PC-9 (cell line): ENCODE measurements at regions of chr3 and their contacts with region 1.

Region 1: GRCh38 chr3:168213920-168214319 is 118.2 kb upstream of the GOLIM4 start:
- DNase-seq: no peak
- H3K4me3 ChIP-seq: no peak overlapping the region
- H3K27ac ChIP-seq: no peak overlapping the region
- H3K4me1 ChIP-seq: no peaks in the 10 kb centered on the region
- H3K27me3 ChIP-seq: no peaks in the 10 kb centered on the region
- CTCF ChIP-seq: no peak

Region 2: GRCh38 chr3:168285506-168285905 is 71.6 kb after region 1 on chr3:
- CTCF ChIA-PET with region 1: no interaction called
- POLR2A ChIA-PET with region 1: no interaction called
- intact Hi-C with region 1: no loop called
- DNase-seq: no peak
- H3K4me3 ChIP-seq: no peak overlapping the region
- H3K27ac ChIP-seq: no peak overlapping the region
- H3K4me1 ChIP-seq: no peaks in the 10 kb centered on the region
- H3K27me3 ChIP-seq: no peaks in the 10 kb centered on the region
- CTCF ChIP-seq: no peak

Region 3: DNA sequence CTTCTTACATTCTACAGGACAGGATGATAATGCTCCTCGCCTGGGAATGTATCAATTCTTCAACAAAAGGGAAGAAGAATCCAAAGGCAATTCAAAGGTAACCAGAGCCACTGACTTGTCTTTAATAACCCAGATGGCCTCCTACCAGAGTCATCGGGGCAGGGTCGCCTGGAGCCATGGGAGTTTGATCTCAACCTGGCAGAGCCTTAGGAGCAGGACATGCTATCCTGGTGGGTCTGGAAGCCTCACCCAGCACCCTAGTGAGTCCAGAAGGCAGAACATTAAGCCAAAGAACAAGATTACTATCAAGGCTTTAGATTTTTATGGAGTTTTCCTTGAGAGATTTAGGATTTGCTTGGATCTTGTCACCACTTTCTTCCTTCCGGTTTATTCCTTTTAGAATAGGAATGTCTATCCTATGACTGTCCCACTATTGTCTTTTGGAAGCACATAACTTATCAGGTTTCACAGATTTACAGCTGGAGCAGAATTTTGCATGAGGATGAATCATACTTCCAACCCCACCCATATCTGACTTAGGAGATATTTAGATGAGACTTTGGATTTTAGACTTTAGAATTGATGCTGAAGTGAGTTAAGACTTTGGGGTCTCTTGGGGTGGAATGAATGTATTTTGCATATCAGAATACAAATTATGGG is 212.1 kb after region 1 on chr3:
- CTCF ChIA-PET with region 1: no interaction called
- POLR2A ChIA-PET with region 1: no interaction called
- intact Hi-C with region 1: no loop called
- DNase-seq: peak in 1 of 2 experiments; percentile 61
- H3K4me3 ChIP-seq: no peak overlapping the region
- H3K27ac ChIP-seq: no peak overlapping the region
- H3K4me1 ChIP-seq: peaks cover 12% of the 10 kb centered on the region
- H3K27me3 ChIP-seq: no peaks in the 10 kb centered on the region
- CTCF ChIP-seq: no peak

Region 4: DNA sequence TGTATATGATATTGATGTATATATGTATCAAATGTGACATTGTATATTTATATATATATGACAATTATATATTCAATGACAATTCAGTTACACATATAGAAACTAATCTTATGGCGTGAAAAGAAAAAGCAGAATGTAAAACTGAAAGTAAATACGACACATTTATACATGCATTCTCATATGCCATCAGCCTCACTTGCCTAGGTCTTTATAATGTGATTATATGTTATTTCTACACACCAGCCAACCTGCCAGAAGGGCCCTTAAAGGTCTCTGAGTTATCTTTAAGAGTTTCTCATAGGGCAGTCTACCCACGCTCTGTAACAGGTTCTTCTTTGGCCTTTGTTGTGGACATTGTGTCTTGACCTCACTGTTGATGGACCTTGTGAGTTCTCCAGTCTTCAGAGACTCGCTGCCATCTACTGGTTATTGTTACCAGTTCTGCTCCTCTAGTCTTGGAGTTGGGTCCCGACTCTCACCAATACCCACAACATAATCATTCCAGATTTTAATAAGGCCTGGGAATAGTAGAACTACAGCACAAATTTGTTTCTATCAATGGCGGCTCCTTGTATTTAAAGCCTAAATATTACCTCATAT is 253.3 kb after region 1 on chr3:
- CTCF ChIA-PET with region 1: no interaction called
- POLR2A ChIA-PET with region 1: no interaction called
- intact Hi-C with region 1: loop called (anchors 1 kb)
- DNase-seq: peak in 1 of 2 experiments; percentile 34
- H3K4me3 ChIP-seq: no peak overlapping the region
- H3K27ac ChIP-seq: no peak overlapping the region
- H3K4me1 ChIP-seq: no peaks in the 10 kb centered on the region
- H3K27me3 ChIP-seq: no peaks in the 10 kb centered on the region
- CTCF ChIP-seq: peak; percentile 47

Region 5: DNA sequence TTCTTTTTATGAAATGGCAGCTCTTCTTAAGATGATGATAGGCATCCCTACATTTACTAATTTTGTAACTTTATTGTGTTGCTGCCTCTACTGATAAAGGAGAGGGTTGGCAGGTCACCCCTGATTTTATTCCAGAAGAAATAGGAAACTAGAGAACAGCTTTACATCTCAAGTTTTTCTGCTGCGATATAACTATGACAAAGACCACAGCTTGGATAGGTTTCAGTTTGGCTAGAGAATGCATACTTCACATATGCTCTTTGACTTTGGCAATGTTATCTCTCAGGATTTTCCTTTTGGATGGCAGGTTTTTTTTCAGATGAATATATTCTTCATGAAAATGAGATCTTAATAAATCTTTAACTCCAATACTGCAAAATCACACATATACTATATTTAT is 277.1 kb after region 1 on chr3:
- CTCF ChIA-PET with region 1: no interaction called
- POLR2A ChIA-PET with region 1: no interaction called
- intact Hi-C with region 1: no loop called
- DNase-seq: no peak
- H3K4me3 ChIP-seq: no peak overlapping the region
- H3K27ac ChIP-seq: no peak overlapping the region
- H3K4me1 ChIP-seq: no peaks in the 10 kb centered on the region
- H3K27me3 ChIP-seq: no peaks in the 10 kb centered on the region
- CTCF ChIP-seq: no peak

Region 6: DNA sequence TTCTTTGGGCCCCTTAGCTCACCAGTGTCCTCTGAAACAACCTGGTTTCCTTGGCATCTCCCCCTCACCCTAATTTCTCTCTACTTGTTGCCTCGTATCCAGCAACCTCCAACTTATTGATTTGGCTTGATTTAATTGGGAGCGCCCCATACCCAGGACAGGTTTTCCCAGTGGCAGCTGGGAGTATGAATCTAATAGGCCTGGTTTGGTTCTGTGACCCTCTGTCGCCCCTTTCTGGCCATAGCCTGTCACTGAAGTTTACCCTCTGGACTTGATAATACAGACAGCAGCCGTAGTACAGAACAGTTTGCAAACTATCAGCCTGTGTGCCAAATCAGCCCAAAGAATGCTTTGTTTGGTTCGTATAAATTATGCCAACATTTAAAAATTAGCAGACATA is 406.9 kb after region 1 on chr3:
- CTCF ChIA-PET with region 1: interaction called, 7 read pairs
- POLR2A ChIA-PET with region 1: no interaction called
- intact Hi-C with region 1: loop called (anchors 2 kb)
- DNase-seq: peak in 1 of 2 experiments; percentile 18
- H3K4me3 ChIP-seq: no peak overlapping the region
- H3K27ac ChIP-seq: no peak overlapping the region
- H3K4me1 ChIP-seq: no peaks in the 10 kb centered on the region
- H3K27me3 ChIP-seq: no peaks in the 10 kb centered on the region
- CTCF ChIP-seq: peak; percentile 68

Region 7: GRCh38 chr3:169077394-169077906 is 863.5 kb after region 1 on chr3:
- CTCF ChIA-PET with region 1: interaction called, 16 read pairs
- POLR2A ChIA-PET with region 1: no interaction called
- intact Hi-C with region 1: no loop called
- DNase-seq: no peak
- H3K4me3 ChIP-seq: no peak overlapping the region
- H3K27ac ChIP-seq: no peak overlapping the region
- H3K4me1 ChIP-seq: no peaks in the 10 kb centered on the region
- H3K27me3 ChIP-seq: no peaks in the 10 kb centered on the region
- CTCF ChIP-seq: no peak